Dorsolateral prefrontal cortex (tissue), 120 donors: ENCODE measurements at regions of chr1 and their contacts with region 1.

Region 1: DNA sequence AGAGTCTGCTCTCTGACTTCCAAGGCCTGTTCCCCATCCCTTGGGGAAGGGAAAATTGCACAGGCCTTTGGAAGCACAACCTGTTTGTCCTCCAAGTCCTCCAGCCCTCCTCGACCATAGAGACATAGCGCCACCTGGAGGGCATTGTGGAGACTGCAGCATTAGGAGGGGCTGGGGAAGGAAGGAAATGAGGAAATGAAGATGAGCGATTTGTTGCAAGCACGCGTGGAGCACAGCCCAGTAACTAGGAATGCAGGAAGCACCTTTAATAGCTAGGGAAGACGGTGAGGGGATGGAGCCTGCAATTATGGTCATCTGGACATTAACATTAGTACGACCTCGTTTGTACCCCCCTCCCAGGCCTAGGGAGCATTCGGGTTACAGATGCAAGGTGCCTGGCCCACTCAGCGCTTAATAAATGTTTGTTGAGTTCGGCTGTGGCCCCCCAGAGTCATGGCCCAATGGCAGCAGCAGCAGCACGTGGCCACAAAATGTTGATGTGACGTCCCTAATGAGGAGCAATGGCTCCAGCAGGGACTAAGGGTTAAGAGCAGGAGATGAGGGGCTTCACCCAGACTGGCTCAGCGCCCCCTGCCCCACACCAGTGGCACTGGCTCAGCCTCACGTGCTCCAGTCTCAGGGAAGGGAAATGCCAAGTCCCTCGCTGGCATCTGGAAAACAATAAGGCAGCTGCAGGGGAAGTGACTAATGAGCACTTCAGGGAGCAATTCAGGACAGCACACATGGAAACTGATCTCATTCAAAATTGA is 8.0 kb upstream of the CAMK2N1 start:
- DNase-seq: peak; percentile 70 to 89 (median 84)
- H3K4me3 ChIP-seq: peak overlapping the region in 21 of 59 donors; percentile 6 to 44 (median 29)
- H3K27ac ChIP-seq: peak overlapping the region in 57 of 59 donors; percentile 19 to 90 (median 74)
- H3K27me3 ChIP-seq: no peaks in the 10 kb centered on the region
- CTCF ChIP-seq: peak; percentile 93 to 100 (median 98)

Region 2: GRCh38 chr1:19918057-19918456 is 576.0 kb before region 1 on chr1:
- intact Hi-C with region 1: loop called in 1 of 2 experiments (anchors 5 kb)
- DNase-seq: peak; percentile 64 to 91 (median 84)
- H3K4me3 ChIP-seq: no peak overlapping the region
- H3K27ac ChIP-seq: peak overlapping the region in 8 of 59 donors; percentile 26 to 70 (median 56)
- H3K27me3 ChIP-seq: peaks cover 0 to 1% (median 0%) of the 10 kb centered on the region in 45 donors
- CTCF ChIP-seq: peak; percentile 87 to 98 (median 94)

Region 3: GRCh38 chr1:20164694-20165202 is 329.3 kb before region 1 on chr1:
- intact Hi-C with region 1: loop called (anchors 5 to 10 kb)
- DNase-seq: peak in 1 of 10 donors; percentile 43
- H3K4me3 ChIP-seq: no peak overlapping the region
- H3K27ac ChIP-seq: peak overlapping the region in 18 of 59 donors; percentile 10 to 72 (median 42)
- H3K27me3 ChIP-seq: no peaks in the 10 kb centered on the region
- CTCF ChIP-seq: peak in 2 of 56 donors; percentile 6 to 15

Region 4: GRCh38 chr1:20233394-20233793 is 260.6 kb before region 1 on chr1:
- intact Hi-C with region 1: loop called in 1 of 2 experiments (anchors 5 kb)
- DNase-seq: no peak
- H3K4me3 ChIP-seq: peak overlapping the region in 11 of 59 donors; percentile 6 to 44 (median 34)
- H3K27ac ChIP-seq: peak overlapping the region in 7 of 59 donors; percentile 4 to 38 (median 23)
- H3K27me3 ChIP-seq: peaks cover 0 to 10% (median 0%) of the 10 kb centered on the region in 45 donors
- CTCF ChIP-seq: peak in 41 of 56 donors; percentile 14 to 48 (median 29)

Region 5: DNA sequence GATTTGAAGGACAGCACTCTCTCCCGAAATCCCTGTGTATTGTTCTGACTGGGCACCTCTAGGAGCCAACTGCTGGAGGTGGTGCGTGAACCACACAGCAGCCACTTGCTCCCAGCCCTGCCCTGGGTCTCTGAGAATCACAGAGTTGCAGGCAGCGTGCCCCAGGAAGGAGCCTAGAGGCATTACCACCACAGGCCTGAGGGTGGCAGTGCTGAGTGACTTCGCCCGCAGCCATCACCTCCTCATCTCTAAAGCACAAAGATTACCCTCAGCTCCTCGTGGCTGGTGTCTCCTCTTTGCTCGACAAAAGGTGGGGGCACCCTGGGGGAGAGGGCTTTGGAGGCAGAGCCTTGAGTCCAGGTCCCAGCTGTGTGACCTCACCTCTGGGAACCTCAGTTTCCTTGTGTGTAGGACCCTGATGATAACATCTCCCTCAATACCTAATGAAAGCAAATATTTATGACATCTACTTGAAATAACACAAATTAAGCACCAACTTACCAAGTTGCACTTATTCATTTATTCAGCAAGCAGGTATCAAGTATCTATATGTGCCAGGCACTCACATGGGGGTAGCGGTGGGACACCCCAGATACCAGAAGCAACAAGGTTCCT is 117.0 kb before region 1 on chr1:
- intact Hi-C with region 1: loop called in 1 of 2 experiments (anchors 1 kb)
- DNase-seq: peak; percentile 48 to 80 (median 64)
- H3K4me3 ChIP-seq: no peak overlapping the region
- H3K27ac ChIP-seq: peak overlapping the region in 2 of 59 donors; percentile 4 to 46
- H3K27me3 ChIP-seq: no peaks in the 10 kb centered on the region
- CTCF ChIP-seq: peak; percentile 45 to 93 (median 86)

Region 6: DNA sequence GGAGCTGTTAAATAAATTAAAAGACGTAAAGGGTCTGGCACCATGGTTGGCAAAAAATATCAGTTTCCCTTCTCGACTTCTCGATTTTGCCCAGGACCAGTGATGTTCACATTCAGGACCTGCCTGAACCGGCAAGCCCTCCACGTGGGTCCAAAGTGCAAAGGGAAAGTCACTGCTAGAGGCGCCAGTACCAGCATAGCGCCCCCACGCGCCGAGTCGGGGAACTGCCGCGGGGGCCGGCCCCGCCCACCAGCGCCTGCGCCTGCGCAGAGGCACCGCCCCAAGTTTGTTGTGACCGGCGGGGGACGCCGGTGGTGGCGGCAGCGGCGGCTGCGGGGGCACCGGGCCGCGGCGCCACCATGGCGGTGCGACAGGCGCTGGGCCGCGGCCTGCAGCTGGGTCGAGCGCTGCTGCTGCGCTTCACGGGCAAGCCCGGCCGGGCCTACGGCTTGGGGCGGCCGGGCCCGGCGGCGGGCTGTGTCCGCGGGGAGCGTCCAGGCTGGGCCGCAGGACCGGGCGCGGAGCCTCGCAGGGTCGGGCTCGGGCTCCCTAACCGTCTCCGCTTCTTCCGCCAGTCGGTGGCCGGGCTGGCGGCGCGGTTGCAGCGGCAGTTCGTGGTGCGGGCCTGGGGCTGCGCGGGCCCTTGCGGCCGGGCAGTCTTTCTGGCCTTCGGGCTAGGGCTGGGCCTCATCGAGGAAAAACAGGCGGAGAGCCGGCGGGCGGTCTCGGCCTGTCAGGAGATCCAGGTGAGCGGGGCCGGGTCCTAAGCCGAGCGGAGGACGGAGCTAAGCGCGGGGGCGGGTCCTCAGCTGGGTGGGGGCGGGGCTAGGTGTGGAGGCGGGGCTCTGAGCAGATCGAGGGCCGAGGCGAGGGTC is 139.4 kb after region 1 on chr1 and contains the start of gene PINK1:
- intact Hi-C with region 1: no loop called
- DNase-seq: peak; percentile 59 to 91 (median 77)
- H3K4me3 ChIP-seq: peak within 1 kb of the TSS; percentile 68 to 100 (median 92)
- H3K27ac ChIP-seq: peak within 1 kb of the TSS; percentile 31 to 99 (median 91)
- H3K27me3 ChIP-seq: no peaks in the 10 kb centered on the region
- CTCF ChIP-seq: peak; percentile 73 to 99 (median 96)
- total RNA-seq, gene PINK1: 159 to 357 (median 261) TPM

Region 7: DNA sequence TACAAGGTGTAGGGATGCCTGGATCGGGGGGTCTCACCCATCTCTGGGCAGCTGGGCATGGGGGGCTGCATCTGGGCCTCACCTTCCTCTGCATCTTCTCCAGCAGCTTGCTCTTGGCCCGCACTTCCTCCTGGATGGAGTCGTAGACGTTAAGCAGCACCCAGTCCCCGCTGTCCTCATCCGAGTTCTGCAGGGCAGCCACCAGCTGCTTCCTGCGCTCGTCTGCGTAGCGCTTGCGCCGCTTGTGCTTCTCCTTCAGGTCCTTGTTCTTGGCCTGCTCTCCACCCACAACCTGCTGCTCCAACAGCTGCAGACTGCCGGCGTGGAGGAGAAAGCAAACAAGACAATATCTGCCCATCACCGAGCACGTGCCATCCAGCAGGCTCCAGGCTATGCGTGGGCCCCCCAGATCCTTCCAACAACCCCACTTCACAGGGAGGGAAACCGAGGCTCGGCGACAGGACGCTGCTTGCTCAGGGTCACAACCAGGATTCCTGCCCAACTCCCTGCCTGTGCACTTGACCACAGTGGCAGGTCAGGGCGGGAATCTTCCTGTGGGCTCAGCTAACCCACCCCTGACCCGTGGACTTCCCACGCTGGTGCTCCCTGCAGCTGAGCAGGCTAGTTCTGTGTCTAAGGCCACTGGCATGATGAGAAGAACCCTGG is 188.7 kb after region 1 on chr1:
- intact Hi-C with region 1: no loop called
- DNase-seq: peak in 8 of 10 donors; percentile 47 to 72 (median 64)
- H3K4me3 ChIP-seq: peak overlapping the region in 49 of 59 donors; percentile 3 to 56 (median 33)
- H3K27ac ChIP-seq: peak overlapping the region in 45 of 59 donors; percentile 7 to 94 (median 79)
- H3K27me3 ChIP-seq: no peaks in the 10 kb centered on the region
- CTCF ChIP-seq: no peak

Region 8: DNA sequence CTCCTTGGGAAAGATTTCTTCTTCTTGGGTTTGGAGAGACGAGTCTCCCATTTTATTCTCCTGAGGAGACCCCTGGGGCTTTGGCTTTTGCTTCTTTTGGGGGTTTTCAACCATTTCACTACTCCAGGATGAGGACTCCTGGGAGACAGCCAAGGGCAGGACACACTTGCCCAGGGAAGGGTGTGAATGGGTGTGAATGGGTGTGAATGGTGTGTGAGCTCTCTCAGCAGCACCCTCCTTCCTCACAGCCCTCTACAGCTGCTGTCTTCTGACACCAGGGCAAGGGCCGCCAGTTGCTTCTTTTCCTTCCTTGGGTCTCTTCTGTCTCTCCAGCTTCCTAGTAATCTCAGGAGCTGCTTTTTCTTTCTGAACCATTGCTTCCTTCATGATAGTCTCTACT is 199.6 kb after region 1 on chr1:
- intact Hi-C with region 1: no loop called
- DNase-seq: no peak
- H3K4me3 ChIP-seq: no peak overlapping the region
- H3K27ac ChIP-seq: no peak overlapping the region
- H3K27me3 ChIP-seq: no peaks in the 10 kb centered on the region
- CTCF ChIP-seq: no peak